ENCODE measurements at regions of chr6 and their contacts with region 1.

Region 1: DNA sequence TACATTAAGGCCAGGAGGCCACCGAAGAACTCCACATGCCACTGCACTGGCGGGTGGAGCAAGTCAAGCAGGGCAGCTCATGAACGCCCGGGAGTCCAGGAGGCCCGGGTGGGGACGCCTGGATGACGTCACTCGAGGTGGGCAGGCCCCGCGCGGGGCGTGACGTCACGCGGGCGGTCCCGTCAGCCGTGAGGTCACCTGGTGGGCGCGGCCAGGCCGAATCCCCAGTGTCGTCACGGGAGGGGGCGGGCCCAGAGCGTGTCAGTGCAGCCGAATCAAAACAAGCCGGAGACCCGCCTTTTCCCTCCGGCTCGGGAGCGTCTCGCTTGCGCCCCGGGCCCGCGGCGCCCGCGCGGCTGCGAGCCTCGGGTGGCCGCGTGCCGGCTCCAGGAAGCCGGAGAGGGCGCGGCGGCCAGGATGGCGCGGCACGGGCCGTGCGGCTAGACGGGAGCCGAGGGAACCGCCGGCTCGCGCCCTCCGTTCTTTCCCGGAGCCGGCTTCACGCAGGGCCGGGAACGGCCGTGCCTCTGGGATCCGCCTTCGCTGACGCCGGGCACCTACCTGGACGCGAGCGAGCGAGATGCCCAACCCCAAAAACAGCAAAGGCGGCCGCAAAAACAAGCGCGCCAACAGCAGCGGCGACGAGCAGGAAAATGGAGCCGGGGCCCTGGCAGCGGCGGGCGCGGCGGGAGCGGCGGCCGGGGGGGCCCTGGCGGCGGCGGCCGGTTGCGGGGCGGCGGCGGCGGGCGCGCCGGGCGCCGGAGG is at the start of gene HECA:
- DNase-seq: peak; percentile 98 to 100 (median 99)
- H3K4me3 ChIP-seq: peak within 1 kb of the TSS; percentile 75 to 95
- H3K4me3 Mint-ChIP-seq: peak within 1 kb of the TSS; percentile 90 to 98 (median 95)
- H3K27ac ChIP-seq: peak within 1 kb of the TSS; percentile 97
- H3K27ac Mint-ChIP-seq: peak within 1 kb of the TSS; percentile 98 to 100 (median 99)
- H3K4me1 ChIP-seq: peaks cover 60% of the 10 kb centered on the region
- H3K4me1 Mint-ChIP-seq: peaks cover 48 to 84% (median 57%) of the 10 kb centered on the region in 4 donors
- H3K27me3 ChIP-seq: no peaks in the 10 kb centered on the region
- H3K27me3 Mint-ChIP-seq: no peaks in the 10 kb centered on the region
- total RNA-seq, gene HECA: 154 to 161 TPM

Region 2: GRCh38 chr6:139028658-139029469 is 106.1 kb before region 1 on chr6 and contains the start of gene ABRACL:
- CTCF ChIA-PET with region 1: interaction called, 4 read pairs
- POLR2A ChIA-PET with region 1: interaction called, 27 read pairs
- intact Hi-C with region 1: loop called (anchors 1 kb)
- DNase-seq: peak; percentile 74 to 88 (median 75)
- H3K4me3 ChIP-seq: peak within 1 kb of the TSS; percentile 59 to 97
- H3K4me3 Mint-ChIP-seq: peak within 1 kb of the TSS in 5 of 8 donors; percentile 93 to 98 (median 95)
- H3K27ac ChIP-seq: peak within 1 kb of the TSS; percentile 88
- H3K27ac Mint-ChIP-seq: peak within 1 kb of the TSS; percentile 88 to 98 (median 92)
- H3K4me1 ChIP-seq: peaks cover 46% of the 10 kb centered on the region
- H3K4me1 Mint-ChIP-seq: peaks cover 22 to 34% (median 28%) of the 10 kb centered on the region in 4 donors
- H3K27me3 ChIP-seq: no peaks in the 10 kb centered on the region
- H3K27me3 Mint-ChIP-seq: no peaks in the 10 kb centered on the region
- total RNA-seq, gene ABRACL: 103 to 112 TPM

Region 3: GRCh38 chr6:139146317-139146726 is 11.3 kb after region 1 on chr6:
- CTCF ChIA-PET with region 1: interaction called, 6 read pairs
- POLR2A ChIA-PET with region 1: interaction called, 107 read pairs
- intact Hi-C with region 1: loop called (anchors 1 kb)
- DNase-seq: no peak
- H3K4me3 ChIP-seq: peak overlapping the region; percentile 39 to 40
- H3K4me3 Mint-ChIP-seq: peak overlapping the region; percentile 66 to 90 (median 82)
- H3K27ac ChIP-seq: peak overlapping the region; percentile 50
- H3K27ac Mint-ChIP-seq: peak overlapping the region; percentile 69 to 92 (median 86)
- H3K4me1 ChIP-seq: peaks cover 97% of the 10 kb centered on the region
- H3K4me1 Mint-ChIP-seq: peaks cover 80 to 94% (median 87%) of the 10 kb centered on the region in 4 donors
- H3K27me3 ChIP-seq: no peaks in the 10 kb centered on the region
- H3K27me3 Mint-ChIP-seq: no peaks in the 10 kb centered on the region

Region 4: DNA sequence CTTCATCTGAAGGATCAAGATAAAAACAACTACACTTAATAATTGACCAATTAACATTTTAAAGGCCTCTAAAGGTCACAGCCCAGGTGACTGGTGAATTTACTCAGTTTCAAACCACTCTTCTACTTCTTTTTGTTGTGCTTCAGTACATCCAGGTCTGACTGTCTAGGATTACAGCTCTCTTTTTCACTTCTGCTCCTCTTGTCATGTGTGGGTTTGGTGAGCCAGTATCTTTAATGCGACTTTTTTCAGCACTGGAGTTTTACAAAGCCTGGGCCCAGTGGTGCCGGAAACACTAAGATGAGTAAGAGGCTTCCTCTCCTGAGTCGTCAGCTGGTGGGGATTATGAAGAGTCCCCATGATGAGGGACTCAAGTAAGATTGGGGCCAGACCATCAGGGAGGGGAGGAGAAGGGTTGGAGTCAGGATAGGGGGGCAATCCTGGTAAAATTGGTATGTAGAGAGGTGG is 26.9 kb after region 1 on chr6:
- CTCF ChIA-PET with region 1: interaction called, 54 read pairs
- POLR2A ChIA-PET with region 1: interaction called, 169 read pairs
- intact Hi-C with region 1: loop called (anchors 1 kb)
- DNase-seq: peak; percentile 62 to 87 (median 69)
- H3K4me3 ChIP-seq: peak overlapping the region in 1 of 2 donors; percentile 12
- H3K4me3 Mint-ChIP-seq: peak overlapping the region; percentile 76 to 91 (median 83)
- H3K27ac ChIP-seq: peak overlapping the region; percentile 56
- H3K27ac Mint-ChIP-seq: peak overlapping the region; percentile 86 to 98 (median 95)
- H3K4me1 ChIP-seq: peaks cover 100% of the 10 kb centered on the region
- H3K4me1 Mint-ChIP-seq: peaks cover 73 to 97% (median 85%) of the 10 kb centered on the region in 4 donors
- H3K27me3 ChIP-seq: no peaks in the 10 kb centered on the region
- H3K27me3 Mint-ChIP-seq: no peaks in the 10 kb centered on the region

Region 5: DNA sequence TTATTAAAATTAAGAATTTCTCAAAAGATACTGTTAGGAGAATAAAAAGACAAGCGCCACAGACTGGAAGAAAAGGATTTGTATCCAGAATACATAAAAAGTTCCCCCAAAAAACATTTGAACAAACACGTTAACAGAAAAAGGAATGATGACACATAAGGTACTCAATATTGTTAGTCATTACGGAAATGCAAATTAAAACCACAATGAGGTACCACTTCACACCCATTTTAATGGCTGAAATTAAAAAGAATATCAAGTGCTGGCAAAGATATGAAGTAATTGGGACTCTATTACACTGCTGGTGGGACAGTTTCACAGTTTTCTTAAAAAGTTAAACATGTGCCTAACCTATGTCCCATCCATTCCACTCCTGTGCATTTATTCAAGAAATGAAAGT is 51.2 kb after region 1 on chr6:
- CTCF ChIA-PET with region 1: interaction called, 5 read pairs
- POLR2A ChIA-PET with region 1: interaction called, 12 read pairs
- intact Hi-C with region 1: no loop called
- DNase-seq: no peak
- H3K4me3 ChIP-seq: no peak overlapping the region
- H3K4me3 Mint-ChIP-seq: peak overlapping the region in 5 of 8 donors; percentile 23 to 63 (median 36)
- H3K27ac ChIP-seq: no peak overlapping the region
- H3K27ac Mint-ChIP-seq: peak overlapping the region; percentile 20 to 76 (median 42)
- H3K4me1 ChIP-seq: peaks cover 13% of the 10 kb centered on the region
- H3K4me1 Mint-ChIP-seq: peaks cover 36 to 55% (median 45%) of the 10 kb centered on the region in 4 donors
- H3K27me3 ChIP-seq: no peaks in the 10 kb centered on the region
- H3K27me3 Mint-ChIP-seq: no peaks in the 10 kb centered on the region

Region 6: DNA sequence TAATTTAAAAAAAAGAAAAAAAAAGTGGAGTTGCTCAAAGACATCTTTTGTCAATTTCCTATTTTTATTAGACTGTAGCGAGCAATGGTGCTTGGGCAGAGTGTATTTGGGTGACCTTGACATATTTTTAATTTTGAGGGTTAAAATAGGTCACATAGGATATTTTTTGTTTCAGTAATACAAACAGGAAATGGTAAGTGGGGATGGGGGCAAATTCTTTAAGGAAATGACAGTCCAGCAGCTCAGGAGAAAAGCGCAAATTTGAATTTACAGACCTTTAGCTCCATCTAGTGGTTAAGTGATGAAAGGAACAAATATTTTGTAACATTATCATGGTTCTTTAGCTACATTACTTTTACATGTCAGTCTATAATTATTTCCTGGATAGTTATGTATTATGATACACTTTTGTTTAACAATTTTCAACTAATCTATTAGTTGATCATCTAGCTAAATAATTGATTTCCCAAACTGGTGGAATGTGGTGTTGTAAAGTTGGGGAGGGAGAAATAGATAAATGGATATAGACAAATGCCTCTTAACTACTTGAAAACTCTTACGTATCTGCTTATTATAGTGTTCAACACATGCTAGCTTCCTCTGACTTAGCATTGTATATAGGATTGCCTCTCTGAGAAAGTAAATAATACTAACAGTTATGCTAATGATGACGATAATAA is 229.4 kb after region 1 on chr6:
- CTCF ChIA-PET with region 1: interaction called, 15 read pairs
- POLR2A ChIA-PET with region 1: interaction called, 6 read pairs
- intact Hi-C with region 1: no loop called
- DNase-seq: peak in 4 of 5 donors; percentile 66 to 74 (median 68)
- H3K4me3 ChIP-seq: no peak overlapping the region
- H3K4me3 Mint-ChIP-seq: peak overlapping the region in 7 of 8 donors; percentile 27 to 64 (median 36)
- H3K27ac ChIP-seq: no peak overlapping the region
- H3K27ac Mint-ChIP-seq: peak overlapping the region in 6 of 7 donors; percentile 2 to 82 (median 62)
- H3K4me1 ChIP-seq: peaks cover 20% of the 10 kb centered on the region
- H3K4me1 Mint-ChIP-seq: peaks cover 28 to 45% (median 33%) of the 10 kb centered on the region in 4 donors
- H3K27me3 ChIP-seq: no peaks in the 10 kb centered on the region
- H3K27me3 Mint-ChIP-seq: no peaks in the 10 kb centered on the region

Region 7: DNA sequence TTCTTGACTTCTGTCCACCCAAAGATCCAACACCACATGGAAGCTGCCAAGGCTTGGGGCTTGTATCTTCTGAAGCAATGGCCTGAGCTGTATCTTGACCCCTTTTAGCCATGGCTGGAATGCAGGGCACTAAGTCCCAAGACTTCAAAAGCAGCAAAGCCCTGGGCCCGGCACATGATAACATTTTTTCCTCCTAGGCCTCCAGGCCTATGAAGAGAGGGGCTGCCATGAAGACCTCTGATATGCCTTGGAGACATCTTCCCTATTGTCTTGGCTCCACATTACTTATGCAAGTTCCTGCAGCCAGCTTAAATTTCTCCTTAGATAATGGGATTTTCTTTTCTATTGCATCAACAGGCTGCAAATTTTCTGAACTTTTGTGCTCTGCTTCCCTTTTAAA is 1492.0 kb after region 1 on chr6:
- CTCF ChIA-PET with region 1: no interaction called
- POLR2A ChIA-PET with region 1: no interaction called
- intact Hi-C with region 1: no loop called
- DNase-seq: no peak
- H3K4me3 ChIP-seq: no peak overlapping the region
- H3K4me3 Mint-ChIP-seq: no peak overlapping the region
- H3K27ac ChIP-seq: no peak overlapping the region
- H3K27ac Mint-ChIP-seq: no peak overlapping the region
- H3K4me1 ChIP-seq: no peaks in the 10 kb centered on the region
- H3K4me1 Mint-ChIP-seq: no peaks in the 10 kb centered on the region
- H3K27me3 ChIP-seq: no peaks in the 10 kb centered on the region
- H3K27me3 Mint-ChIP-seq: peaks cover 0 to 5% of the 10 kb centered on the region in 2 donors

Measured in CD4-positive, alpha-beta memory T cell (primary cell).